ENCODE measurements at regions of chr12 and their contacts with region 1.

Region 1: DNA sequence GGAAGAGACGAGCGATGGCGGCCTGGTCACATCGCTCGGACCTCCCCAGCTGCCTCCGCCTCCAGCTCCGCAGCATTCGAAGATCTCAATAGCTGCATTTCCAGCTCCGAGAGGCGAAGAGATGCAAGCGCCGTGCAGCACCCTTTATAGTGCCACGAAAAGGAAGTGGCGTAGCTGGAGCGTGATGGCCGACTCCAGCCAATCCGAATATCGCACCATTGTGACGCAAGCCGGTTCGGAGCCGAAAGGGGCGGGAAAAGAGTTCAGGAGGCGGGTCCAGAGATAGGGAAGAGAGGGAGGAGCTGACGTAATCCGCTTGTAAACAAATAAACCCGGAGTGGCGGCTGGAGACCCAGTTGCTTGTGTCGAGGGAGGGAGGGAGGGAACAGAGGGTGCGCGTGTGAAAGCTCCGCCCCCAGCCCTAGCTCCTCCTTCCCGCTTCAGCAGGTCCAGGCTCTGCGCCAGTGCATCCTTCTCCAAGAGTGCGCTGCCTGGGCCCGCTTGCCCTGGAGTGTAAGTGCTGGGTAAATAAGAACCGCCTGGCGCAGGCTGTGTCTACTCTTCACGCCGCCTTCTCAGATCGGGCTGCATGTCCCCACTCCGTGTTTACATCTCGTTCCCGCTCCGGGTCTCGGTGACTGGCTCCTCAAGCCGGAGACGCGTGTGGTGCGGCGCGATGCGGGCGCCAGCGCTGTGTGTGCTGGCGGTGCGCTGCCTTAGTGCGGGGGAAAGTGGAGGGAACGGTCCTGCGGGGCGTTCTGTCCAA is at the start of gene BTG1:
- DNase-seq: peak; percentile 99
- H3K4me3 ChIP-seq: peak within 1 kb of the TSS; percentile 96
- H3K27ac ChIP-seq: peak within 1 kb of the TSS; percentile 93
- H3K4me1 ChIP-seq: peaks cover 33% of the 10 kb centered on the region
- H3K27me3 ChIP-seq: no peaks in the 10 kb centered on the region
- CTCF ChIP-seq: no peak
- total RNA-seq, gene BTG1: 18.0 and 23.2 TPM in 2 replicates

Region 2: GRCh38 chr12:91382081-91382543 is 763.8 kb before region 1 on chr12:
- CTCF ChIA-PET with region 1: interaction called, 3 read pairs
- POLR2A ChIA-PET with region 1: interaction called, 4 read pairs
- intact Hi-C with region 1: loop called (anchors 5 kb)
- DNase-seq: peak; percentile 82
- H3K4me3 ChIP-seq: peak overlapping the region; percentile 37
- H3K27ac ChIP-seq: no peak overlapping the region
- H3K4me1 ChIP-seq: peaks cover 19% of the 10 kb centered on the region
- H3K27me3 ChIP-seq: peaks cover 8% of the 10 kb centered on the region
- CTCF ChIP-seq: peak; percentile 93

Region 3: DNA sequence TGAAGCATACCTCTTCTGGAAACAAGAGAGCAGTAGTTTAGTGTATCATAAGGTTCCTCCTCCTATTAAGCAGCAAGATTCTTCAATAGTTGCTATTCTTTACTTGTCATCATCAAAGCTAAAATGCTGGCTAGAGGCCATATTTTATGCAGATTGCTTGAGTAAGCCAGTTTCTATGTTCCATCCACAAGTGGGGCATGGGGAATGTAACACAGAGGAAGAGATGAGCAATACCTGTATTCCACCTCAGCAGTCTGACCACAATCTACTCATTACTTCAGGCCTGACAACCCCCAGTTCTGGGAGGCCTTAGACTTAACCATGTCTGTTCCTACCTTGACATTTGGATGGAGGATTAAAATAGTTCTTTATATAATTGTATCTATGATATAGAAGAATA is 423.8 kb before region 1 on chr12:
- CTCF ChIA-PET with region 1: no interaction called
- POLR2A ChIA-PET with region 1: no interaction called
- intact Hi-C with region 1: no loop called
- DNase-seq: no peak
- H3K4me3 ChIP-seq: no peak overlapping the region
- H3K27ac ChIP-seq: no peak overlapping the region
- H3K4me1 ChIP-seq: no peaks in the 10 kb centered on the region
- H3K27me3 ChIP-seq: no peaks in the 10 kb centered on the region
- CTCF ChIP-seq: no peak

Region 4: DNA sequence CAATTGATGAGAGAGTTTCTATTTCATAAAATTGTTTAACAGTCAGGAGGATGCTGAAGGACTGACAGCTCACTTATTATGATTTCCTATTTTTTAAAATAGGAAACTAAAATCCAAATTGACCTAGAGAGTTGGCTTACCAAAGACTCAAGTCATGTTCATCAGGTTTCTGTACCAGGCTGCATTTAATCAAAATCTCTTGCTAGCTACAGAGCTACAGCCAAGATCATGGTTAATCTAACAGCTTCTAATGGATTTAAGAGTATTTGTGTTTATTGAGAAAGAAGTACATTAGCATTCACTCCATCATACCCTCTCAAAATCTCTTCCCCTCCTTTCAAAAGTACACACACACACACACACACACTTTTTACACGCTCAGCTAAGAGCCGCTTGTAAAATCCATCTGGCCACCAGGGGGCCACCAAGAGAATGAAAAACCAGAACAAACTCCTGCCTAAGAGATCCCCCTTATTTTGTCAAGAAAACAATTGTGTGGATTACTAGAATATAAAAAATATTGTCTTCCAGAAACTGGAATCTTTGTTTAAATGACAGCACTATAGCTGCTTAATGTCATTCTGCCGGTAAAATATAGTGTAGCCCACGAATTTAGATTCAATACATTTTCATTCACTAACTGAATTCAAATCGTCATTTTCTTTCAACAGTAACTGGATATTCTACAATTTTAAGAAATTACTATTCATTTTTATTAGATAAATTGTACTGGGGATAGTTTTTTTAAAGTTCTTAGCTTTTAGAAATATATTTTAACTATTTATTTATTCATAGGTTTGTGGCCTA is 334.2 kb before region 1 on chr12:
- CTCF ChIA-PET with region 1: interaction called, 4 read pairs
- POLR2A ChIA-PET with region 1: interaction called, 5 read pairs
- intact Hi-C with region 1: loop called (anchors 5 kb)
- DNase-seq: peak; percentile 68
- H3K4me3 ChIP-seq: no peak overlapping the region
- H3K27ac ChIP-seq: no peak overlapping the region
- H3K4me1 ChIP-seq: no peaks in the 10 kb centered on the region
- H3K27me3 ChIP-seq: no peaks in the 10 kb centered on the region
- CTCF ChIP-seq: peak; percentile 94

Region 5: GRCh38 chr12:91965781-91966180 is 180.1 kb before region 1 on chr12:
- CTCF ChIA-PET with region 1: no interaction called
- POLR2A ChIA-PET with region 1: no interaction called
- intact Hi-C with region 1: no loop called
- DNase-seq: no peak
- H3K4me3 ChIP-seq: no peak overlapping the region
- H3K27ac ChIP-seq: no peak overlapping the region
- H3K4me1 ChIP-seq: no peaks in the 10 kb centered on the region
- H3K27me3 ChIP-seq: no peaks in the 10 kb centered on the region
- CTCF ChIP-seq: no peak

Region 6: GRCh38 chr12:92208613-92209121 is 62.8 kb after region 1 on chr12:
- CTCF ChIA-PET with region 1: no interaction called
- POLR2A ChIA-PET with region 1: interaction called, 13 read pairs
- intact Hi-C with region 1: loop called (anchors 2 kb)
- DNase-seq: peak; percentile 88
- H3K4me3 ChIP-seq: peak overlapping the region; percentile 35
- H3K27ac ChIP-seq: peak overlapping the region; percentile 85
- H3K4me1 ChIP-seq: peaks cover 14% of the 10 kb centered on the region
- H3K27me3 ChIP-seq: no peaks in the 10 kb centered on the region
- CTCF ChIP-seq: no peak

Region 7: DNA sequence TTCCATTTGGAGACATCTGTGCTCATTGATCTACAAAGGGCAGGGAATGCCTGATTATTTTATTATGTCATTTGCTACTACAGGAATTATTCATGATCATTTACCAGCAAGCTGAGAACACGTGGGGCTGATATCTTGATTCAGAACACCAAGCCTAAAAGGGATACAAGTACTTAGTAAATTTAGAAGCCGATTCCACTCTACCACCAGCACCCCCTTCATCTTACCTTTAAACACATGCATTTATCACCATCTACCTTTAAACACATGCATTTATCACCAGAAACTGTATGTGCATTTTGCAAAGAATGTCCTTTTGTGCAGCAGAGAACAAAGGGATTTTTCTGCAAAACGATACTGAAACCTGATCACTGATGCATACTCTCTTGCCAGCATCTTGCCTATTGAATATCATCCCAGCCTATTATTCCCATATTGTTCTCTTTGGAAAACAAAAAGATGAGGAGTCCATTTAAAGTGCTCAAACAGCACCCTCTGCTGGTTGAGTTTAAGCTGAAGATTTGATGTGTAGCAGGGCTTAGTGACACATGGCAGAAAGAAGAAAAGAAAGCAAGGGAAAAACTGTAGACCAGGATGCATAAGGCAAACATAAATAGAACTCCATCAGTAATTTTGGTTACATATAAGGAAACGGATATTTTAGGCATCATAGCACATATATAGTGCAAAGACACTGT is 424.3 kb after region 1 on chr12:
- CTCF ChIA-PET with region 1: no interaction called
- POLR2A ChIA-PET with region 1: no interaction called
- intact Hi-C with region 1: loop called (anchors 2 kb)
- DNase-seq: peak; percentile 87
- H3K4me3 ChIP-seq: no peak overlapping the region
- H3K27ac ChIP-seq: no peak overlapping the region
- H3K4me1 ChIP-seq: no peaks in the 10 kb centered on the region
- H3K27me3 ChIP-seq: no peaks in the 10 kb centered on the region
- CTCF ChIP-seq: peak; percentile 85

Measured in A673 (cell line).